ENCODE measurements at regions of chr5 and their contacts with region 1.

Region 1: GRCh38 chr5:179697993-179698934 is 503 bp upstream of the CANX start:
- DNase-seq: peak; percentile 100
- H3K4me3 Mint-ChIP-seq: peak overlapping the region; percentile 89
- H3K27ac Mint-ChIP-seq: peak overlapping the region; percentile 99
- H3K4me1 Mint-ChIP-seq: peaks cover 27% of the 10 kb centered on the region
- H3K27me3 Mint-ChIP-seq: no peaks in the 10 kb centered on the region

Region 2: DNA sequence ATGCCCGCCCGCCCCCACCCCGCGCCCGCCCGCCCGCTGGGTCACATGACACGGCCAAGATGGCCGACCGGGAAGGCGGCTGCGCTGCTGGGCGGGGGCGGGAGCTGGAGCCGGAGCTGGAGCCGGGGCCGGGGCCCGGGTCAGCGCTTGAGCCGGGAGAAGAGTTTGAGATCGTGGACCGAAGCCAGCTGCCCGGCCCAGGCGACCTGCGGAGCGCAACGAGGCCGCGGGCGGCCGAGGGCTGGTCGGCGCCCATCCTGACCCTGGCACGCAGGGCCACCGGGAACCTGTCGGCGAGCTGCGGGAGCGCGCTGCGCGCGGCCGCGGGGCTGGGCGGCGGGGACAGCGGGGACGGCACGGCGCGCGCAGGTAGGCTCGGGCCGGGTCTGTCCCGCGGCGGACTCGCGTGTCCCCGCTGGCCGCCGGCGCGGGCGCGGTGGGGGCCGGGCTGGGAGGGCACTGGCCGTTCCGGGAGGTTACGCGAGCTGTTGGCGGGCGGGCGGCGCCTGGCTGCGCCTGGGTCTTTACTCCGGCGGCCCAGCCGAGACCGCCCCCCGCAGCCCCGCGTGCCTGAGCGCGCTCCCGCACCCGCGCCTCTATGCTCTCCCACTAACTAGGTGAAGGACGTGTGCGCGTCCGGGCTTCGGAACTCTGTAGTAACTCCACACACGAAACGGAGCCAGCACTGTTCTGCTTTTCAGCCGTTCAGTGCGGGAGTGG is 147.6 kb before region 1 on chr5 and contains the start of gene RUFY1:
- intact Hi-C with region 1: loop called (anchors 2 kb)
- DNase-seq: peak; percentile 96
- H3K4me3 Mint-ChIP-seq: peak within 1 kb of the TSS; percentile 97
- H3K27ac Mint-ChIP-seq: peak within 1 kb of the TSS; percentile 99
- H3K4me1 Mint-ChIP-seq: peaks cover 23% of the 10 kb centered on the region
- H3K27me3 Mint-ChIP-seq: peaks cover 2% of the 10 kb centered on the region
- total RNA-seq, gene RUFY1: 38.8 and 40.6 TPM in 2 replicates

Region 3: DNA sequence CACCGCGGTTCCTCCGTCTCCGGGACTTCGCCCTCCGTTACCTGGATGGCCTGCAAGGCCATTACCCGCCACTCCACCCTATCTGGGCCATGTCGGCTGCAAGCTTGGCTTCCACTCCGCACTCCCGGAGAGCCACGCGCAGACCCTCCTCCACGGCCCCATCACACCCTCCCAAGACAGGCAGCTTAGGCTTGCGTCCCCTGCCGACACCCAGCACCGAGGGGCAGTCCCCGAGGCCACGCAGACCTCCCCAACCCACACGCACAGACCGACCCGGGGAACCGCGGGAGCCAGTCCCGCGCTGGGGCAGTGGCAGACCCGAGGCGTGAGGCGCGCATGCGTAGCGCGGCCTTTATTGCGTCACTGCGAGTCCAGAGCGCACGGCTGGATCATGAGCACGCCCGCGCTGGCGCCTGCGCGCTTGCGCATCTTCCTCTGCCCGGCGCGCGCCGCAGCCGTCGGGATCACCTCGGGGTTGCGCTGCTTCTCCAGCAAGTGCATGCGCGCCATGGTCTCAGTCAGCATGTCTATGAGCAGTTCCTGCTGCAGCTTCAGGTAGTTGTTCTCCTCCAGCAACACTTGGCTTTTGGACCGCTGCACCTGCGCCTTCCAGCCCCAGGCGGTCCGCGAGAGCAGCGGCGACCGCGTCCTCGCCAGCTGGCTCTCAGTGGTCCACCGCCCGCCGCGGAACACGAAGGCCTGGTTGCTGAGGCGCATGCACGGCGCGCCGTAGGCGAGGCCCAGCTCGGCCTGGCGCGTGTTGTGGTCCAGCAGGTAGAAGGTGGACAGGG is 19.8 kb before region 1 on chr5:
- intact Hi-C with region 1: loop called (anchors 1 kb)
- DNase-seq: peak; percentile 98
- H3K4me3 Mint-ChIP-seq: peak overlapping the region; percentile 100
- H3K27ac Mint-ChIP-seq: peak overlapping the region; percentile 99
- H3K4me1 Mint-ChIP-seq: peaks cover 31% of the 10 kb centered on the region
- H3K27me3 Mint-ChIP-seq: no peaks in the 10 kb centered on the region

Region 4: DNA sequence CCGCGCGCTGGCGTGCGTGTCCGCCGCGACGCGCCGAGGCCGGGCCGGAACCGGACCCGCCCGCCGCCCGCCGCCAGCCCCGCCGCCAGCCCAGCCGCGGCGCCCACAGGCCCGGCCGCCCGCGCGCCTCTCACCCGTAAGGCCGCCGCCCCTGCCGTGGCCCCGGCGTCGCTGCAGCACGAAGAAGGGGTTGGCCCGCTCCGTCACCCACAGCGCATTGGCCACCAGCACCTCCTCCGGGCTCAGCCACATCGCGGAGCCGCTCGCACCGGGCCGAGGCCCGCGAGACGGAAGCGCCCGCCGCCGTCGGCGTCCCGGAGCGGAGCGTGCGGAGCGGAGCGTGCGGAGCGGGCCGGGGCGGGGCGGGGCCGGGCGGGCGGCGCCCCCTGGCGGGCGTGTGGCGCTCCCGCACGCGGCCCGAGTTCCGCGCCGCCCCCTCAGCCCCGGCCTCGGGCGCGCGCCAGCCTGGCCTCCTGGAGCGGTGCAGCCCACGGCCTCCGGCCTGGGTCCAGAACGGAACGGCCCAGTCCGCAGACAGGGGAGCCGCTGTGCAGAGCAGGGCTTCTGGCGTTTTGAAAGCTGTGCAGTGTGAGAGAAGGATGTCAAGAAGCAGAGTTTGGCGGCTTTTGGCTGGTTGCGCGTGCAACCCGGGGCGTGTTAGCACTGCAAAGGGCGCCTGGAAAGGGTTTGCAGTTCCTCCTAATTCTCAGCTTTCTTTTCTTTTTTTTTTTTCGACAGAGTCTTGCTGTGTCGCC is 209.5 kb after region 1 on chr5 and contains the start of gene TBC1D9B:
- intact Hi-C with region 1: loop called (anchors 2 kb)
- DNase-seq: peak; percentile 92
- H3K4me3 Mint-ChIP-seq: peak within 1 kb of the TSS; percentile 96
- H3K27ac Mint-ChIP-seq: peak within 1 kb of the TSS; percentile 92
- H3K4me1 Mint-ChIP-seq: peaks cover 11% of the 10 kb centered on the region
- H3K27me3 Mint-ChIP-seq: no peaks in the 10 kb centered on the region
- total RNA-seq, gene TBC1D9B: 129 and 138 TPM in 2 replicates